Motor neuron (in vitro differentiated cells): ENCODE measurements at regions of chr10 and their contacts with region 1.

Region 1: GRCh38 chr10:113108212-113108835 is 158.3 kb downstream of the TCF7L2 start:
- ATAC-seq: peak in 6 of 8 experiments; percentile 27 to 84 (median 70)
- H3K4me3 ChIP-seq: no peak overlapping the region
- H3K27ac ChIP-seq: no peak overlapping the region
- H3K4me1 ChIP-seq: peaks cover 20 to 25% of the 10 kb centered on the region in 2 donors

Region 2: DNA sequence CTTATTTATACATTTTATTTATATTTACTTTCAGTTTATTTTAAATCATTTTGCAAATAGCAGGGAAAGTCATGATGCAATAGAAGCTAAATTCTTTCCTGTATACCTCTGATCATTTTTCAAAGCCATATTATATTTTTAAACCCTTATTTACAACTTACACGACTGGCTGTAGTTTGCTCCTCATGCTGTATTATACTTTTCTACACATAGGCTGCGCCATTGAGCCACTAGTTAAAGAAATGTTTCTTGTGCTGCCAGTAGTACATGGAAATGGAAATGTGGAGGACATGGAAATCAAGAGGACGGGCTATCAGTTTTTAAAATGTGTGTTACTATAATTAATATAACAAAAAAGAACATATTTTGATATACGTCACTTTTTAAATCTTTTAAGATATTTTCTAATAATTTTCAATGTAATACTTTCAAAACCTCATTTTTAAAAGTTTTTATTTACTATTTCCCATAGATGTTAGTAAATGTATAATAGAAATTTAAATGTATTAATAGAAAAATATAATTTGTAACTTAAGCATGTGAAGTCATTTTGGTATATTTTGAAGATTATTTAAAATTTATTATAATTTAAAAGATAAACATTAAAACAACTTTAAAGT is 542.8 kb before region 1 on chr10:
- in situ Hi-C with region 1: loop called in 1 of 9 experiments (anchors 25 kb)
- ATAC-seq: peak in 6 of 8 experiments; percentile 46 to 88 (median 70)
- H3K4me3 ChIP-seq: no peak overlapping the region
- H3K27ac ChIP-seq: no peak overlapping the region
- H3K4me1 ChIP-seq: peaks cover 5 to 9% of the 10 kb centered on the region in 2 donors

Region 3: GRCh38 chr10:112949875-112950507 is 158.3 kb before region 1 on chr10 and contains the start of gene TCF7L2:
- in situ Hi-C with region 1: loop called in 2 of 9 experiments (anchors 25 kb)
- ATAC-seq: peak; percentile 64 to 83 (median 70)
- H3K4me3 ChIP-seq: peak within 1 kb of the TSS; percentile 33 to 87 (median 74)
- H3K27ac ChIP-seq: peak within 1 kb of the TSS; percentile 75 to 95
- H3K4me1 ChIP-seq: peaks cover 0 to 20% of the 10 kb centered on the region in 2 donors
- total RNA-seq, gene TCF7L2: 2.2 to 62.9 (median 7.5) TPM

Region 4: DNA sequence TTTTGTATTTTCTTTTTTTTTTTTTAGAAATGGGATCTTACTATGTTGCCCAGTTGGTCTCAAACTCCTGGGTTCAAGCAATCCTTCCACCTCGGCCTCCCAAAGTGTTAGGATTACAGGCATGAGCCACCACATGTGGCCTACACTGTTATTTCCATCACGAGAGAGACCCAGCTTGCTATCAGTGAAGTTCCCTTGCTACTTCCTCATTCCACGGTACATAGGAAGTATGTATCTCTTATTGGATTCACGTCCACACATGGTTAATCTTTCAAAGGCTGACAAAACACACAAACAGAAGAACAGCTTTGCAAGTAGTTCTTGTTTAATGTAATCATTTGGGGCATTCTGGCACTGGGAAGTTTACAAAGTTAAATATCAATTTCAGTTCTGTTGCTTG is 694.7 kb after region 1 on chr10:
- in situ Hi-C with region 1: no loop called
- ATAC-seq: no peak
- H3K4me3 ChIP-seq: no peak overlapping the region
- H3K27ac ChIP-seq: no peak overlapping the region
- H3K4me1 ChIP-seq: no peaks in the 10 kb centered on the region